ENCODE measurements at regions of chr12 and their contacts with region 1.

Region 1: GRCh38 chr12:65556681-65557437 is 267.4 kb upstream of the HMGA2 start:
- ATAC-seq: peak; percentile 57 to 98 (median 86)
- H3K4me3 ChIP-seq: no peak overlapping the region
- H3K27ac ChIP-seq: no peak overlapping the region
- H3K4me1 ChIP-seq: no peaks in the 10 kb centered on the region

Region 2: GRCh38 chr12:65656904-65657351 is 100.1 kb after region 1 on chr12:
- in situ Hi-C with region 1: loop called in 1 of 9 experiments (anchors 25 kb)
- ATAC-seq: peak in 5 of 8 experiments; percentile 36 to 94 (median 61)
- H3K4me3 ChIP-seq: no peak overlapping the region
- H3K27ac ChIP-seq: no peak overlapping the region
- H3K4me1 ChIP-seq: no peaks in the 10 kb centered on the region

Region 3: GRCh38 chr12:65720136-65721130 is 163.6 kb after region 1 on chr12:
- in situ Hi-C with region 1: no loop called
- ATAC-seq: peak in 3 of 8 experiments; percentile 24 to 79 (median 76)
- H3K4me3 ChIP-seq: no peak overlapping the region
- H3K27ac ChIP-seq: no peak overlapping the region
- H3K4me1 ChIP-seq: peaks cover 0 to 3% of the 10 kb centered on the region in 2 donors

Region 4: DNA sequence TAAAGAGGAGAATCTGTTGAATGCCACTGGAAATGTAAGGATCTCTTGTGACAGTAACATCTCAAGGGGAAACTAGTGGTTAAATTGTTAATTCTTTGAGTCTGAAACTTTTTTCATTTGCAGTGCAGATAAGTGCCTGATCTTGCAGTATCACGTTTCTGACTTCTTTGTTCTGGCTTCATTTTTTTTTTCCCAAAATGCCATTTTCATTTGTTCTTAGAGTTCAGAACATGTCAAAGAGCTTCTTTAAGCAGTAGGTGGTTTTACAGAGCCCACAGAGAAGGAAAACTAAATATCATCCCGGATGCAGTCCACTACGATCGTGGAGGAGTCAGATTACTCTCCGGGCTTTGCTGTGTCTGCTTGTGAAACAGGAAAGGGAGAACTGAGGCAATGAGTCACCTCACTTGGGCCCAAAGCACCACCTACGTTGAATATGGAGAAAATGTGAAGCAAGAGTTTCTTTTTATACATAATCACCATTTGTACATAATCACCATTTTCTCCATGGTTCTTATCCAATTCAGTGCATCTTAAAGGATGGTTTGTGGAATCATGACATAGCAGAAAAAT is 311.4 kb after region 1 on chr12:
- in situ Hi-C with region 1: loop called in 1 of 9 experiments (anchors 25 kb)
- ATAC-seq: peak in 3 of 8 experiments; percentile 95 to 98 (median 97)
- H3K4me3 ChIP-seq: no peak overlapping the region
- H3K27ac ChIP-seq: no peak overlapping the region
- H3K4me1 ChIP-seq: peaks cover 4 to 10% of the 10 kb centered on the region in 2 donors

Measured in motor neuron (in vitro differentiated cells).